Panc1 (cell line): ENCODE measurements at regions of chr10 and their contacts with region 1.

Region 1: DNA sequence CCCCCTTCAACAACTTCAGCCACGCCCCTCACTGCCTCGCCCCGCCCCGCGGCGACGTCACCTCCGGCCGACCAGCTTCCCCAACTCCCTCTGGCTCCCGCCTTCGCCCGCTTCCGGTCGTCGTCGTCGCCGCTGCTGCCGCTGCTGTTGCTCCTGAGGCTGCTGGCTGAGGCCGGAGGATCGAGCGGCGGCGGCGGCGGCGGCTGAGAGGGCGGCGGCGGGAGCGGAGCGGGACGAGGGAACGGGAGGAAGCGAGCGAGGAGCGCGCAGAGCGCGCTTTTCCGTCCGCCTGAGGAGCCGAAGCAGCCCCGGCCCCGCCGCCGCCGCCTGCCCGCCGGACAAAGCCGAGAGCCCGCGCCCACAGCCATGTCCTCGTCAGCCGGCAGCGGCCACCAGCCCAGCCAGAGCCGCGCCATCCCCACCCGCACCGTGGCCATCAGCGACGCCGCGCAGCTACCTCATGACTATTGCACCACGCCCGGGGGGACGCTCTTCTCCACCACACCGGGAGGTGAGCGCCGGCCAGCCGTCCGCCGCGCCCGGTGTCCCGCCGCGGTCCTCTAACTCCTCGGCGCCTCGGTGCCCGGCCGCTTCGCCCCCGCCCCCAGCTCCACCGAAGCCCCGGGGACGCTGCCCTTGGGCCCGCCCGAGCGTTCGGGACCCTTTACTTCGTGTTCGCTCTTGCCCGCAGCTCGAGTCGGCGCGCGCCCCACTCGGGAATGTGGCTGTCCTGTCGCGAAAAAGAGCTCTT is at the start of gene EIF4EBP2:
- DNase-seq: peak; percentile 84
- ATAC-seq: peak; percentile 97
- H3K4me3 ChIP-seq: peak within 1 kb of the TSS; percentile 86 to 97
- H3K27ac ChIP-seq: peak within 1 kb of the TSS; percentile 87
- H3K4me1 ChIP-seq: peaks cover 18% of the 10 kb centered on the region
- H3K27me3 ChIP-seq: no peaks in the 10 kb centered on the region
- CTCF ChIP-seq: no peak
- total RNA-seq, gene EIF4EBP2: 48.2 TPM

Region 2: GRCh38 chr10:70911386-70911785 is 507.2 kb after region 1 on chr10:
- CTCF ChIA-PET with region 1: no interaction called
- POLR2A ChIA-PET with region 1: interaction called, 11 read pairs
- in situ Hi-C with region 1: no loop called
- intact Hi-C with region 1: no loop called
- DNase-seq: no peak
- ATAC-seq: no peak
- H3K4me3 ChIP-seq: no peak overlapping the region
- H3K27ac ChIP-seq: no peak overlapping the region
- H3K4me1 ChIP-seq: no peaks in the 10 kb centered on the region
- H3K27me3 ChIP-seq: peaks cover 2% of the 10 kb centered on the region; the same call in 1 of the 2 replicates
- CTCF ChIP-seq: no peak

Region 3: DNA sequence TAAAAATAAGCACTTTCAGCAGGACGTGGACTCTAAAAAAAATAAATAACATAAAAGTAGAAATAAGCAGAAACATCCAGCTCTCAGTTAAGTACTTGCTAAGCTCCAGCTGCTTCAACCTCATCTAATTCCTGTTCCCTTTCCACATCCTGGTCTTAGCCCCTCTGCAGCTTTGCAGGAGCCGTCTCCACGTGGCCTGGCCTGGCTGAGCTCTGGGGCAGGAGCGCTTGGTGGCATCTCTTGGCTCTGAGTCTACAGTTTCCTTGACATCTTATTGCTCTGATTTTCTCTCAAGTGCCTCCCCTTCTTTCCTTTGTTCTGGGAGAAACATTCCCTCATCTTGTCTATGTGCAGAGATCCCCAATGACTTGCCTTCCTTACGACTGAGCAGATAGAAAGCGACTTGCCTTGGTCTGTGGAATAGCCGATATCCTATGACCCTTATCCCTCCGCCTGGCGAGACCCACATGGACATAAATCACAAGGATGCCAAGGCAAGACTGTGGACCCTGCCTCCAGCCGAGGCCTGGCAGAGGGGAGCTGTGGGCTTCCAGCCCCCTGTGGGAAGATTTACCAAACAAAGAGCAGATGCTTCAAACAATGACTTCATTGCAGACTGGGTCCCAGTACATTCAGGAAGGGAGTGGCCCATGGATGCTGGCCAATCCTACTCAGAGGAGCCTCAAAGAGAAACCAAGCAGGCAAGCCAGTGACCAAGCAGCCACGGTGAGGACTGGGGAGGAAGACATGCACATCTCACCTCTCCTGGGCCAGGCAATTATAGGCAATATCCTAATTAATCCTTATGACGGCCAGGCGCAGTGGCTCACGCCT is 1622.3 kb after region 1 on chr10:
- CTCF ChIA-PET with region 1: no interaction called
- POLR2A ChIA-PET with region 1: no interaction called
- in situ Hi-C with region 1: no loop called
- intact Hi-C with region 1: no loop called
- DNase-seq: no peak
- ATAC-seq: peak; percentile 24; the same call in 1 of the 2 replicates
- H3K4me3 ChIP-seq: no peak overlapping the region
- H3K27ac ChIP-seq: no peak overlapping the region
- H3K4me1 ChIP-seq: peaks cover 18% of the 10 kb centered on the region
- H3K27me3 ChIP-seq: no peaks in the 10 kb centered on the region
- CTCF ChIP-seq: no peak